GM10248 (cell line): ENCODE measurements at regions of chr12 and their contacts with region 1.

Region 1: DNA sequence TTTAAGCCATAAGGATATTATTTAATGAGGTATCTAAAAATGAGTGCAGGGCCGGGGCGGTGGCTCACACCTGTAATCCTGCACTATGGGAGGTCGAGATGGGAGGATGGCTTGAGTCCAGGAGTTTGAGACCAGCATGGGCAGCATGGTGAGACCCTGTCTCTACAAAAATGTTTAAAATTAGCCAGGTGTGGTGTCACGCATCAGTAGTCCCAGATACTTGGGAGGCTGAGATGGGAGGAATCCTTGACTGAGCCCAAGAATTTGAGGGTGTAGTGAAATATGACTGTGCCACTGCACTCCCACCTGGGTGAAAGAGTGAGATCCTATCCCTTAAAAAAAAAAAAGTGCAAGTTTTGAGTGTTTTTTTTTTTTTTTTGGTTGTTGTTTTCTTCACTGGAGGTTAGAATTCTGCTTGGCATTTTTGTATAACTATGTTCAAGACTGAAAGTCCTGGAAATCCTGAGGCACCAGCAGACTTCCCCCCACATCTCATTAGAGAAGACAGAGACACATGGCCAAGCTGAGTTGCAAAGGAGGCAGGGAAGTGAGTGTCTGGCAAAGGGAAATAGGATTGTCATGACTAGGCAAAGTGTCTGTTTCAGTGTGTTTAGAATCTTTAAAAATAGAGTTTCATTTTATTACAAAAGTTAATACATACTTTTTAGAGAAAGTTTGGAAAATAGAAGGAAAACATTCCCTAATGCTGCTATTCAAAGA is 53.5 kb upstream of the DUSP6 start:
- DNase-seq: no peak
- CTCF ChIP-seq: no peak

Region 2: DNA sequence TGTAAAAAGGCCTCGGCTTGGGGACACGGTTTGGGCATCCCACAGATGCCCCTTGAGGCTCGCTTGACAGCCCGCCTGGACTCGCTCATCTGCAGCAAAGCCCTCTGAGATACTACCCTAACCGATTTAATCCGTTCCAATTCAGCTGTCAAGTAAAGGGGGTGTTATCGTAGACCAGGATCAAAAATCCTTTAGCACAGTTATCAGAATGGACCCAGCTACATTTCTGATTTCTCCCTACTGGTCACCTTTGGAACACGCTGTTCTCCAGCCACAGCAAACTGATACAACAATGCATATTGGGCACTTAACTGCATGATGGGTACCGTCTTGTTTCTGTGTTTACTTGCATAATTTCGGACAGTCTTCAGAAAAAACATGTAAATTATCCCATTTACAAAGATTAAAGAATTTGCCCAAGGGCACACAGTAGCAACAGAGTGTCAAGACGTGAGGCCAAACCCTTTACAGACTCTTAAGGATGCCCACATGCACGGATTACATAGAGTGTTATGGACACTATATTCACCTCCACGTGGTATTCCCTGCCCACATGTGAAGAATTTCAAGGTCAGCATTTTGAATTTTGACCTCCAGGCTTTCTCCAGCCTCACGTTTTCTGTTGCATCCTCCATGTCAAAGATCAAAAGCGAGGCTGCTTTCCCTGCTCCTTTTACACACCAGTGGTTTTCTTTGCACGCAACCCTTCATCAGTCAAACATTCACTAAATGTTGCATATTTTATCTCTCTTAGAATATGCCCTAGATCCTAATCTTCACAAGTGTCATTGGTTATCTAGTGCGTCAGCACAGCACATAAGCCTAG is 50.3 kb before region 1 on chr12:
- CTCF ChIA-PET with region 1: no interaction called
- POLR2A ChIA-PET with region 1: interaction called, 10 read pairs
- DNase-seq: no peak
- CTCF ChIP-seq: no peak

Region 3: DNA sequence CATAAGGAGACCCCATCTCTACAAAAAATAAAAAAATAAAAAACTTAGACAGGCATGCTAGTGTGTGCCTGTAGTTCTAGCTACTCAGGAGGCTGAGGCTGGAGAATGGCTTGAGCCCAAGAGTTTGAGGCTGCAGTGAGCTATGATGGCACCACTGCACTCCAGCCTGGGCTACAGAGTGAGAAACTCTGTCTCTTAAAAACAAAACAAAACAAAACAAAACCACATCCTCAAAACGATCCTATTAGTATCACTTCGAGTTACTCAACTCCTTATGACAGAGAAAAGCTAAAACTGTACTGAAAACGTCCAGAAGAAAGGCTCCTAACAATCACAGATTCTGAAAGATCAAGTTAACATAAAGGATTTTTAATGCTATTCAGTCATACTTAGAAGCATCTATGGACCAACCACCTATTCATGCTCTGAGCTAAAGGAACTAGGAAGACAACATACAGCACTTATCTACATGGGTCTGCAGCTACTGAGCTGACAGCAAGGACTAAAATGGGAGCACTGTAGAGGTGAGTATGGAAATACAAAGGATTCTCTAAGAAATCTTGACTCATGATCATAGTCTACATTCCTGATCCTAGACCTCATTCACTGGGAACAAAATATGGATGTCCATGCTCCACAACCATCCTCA is 21.8 kb after region 1 on chr12:
- CTCF ChIA-PET with region 1: no interaction called
- POLR2A ChIA-PET with region 1: no interaction called
- DNase-seq: peak; percentile 18
- CTCF ChIP-seq: no peak